Caco-2 (cell line): ENCODE measurements at regions of chr4 and their contacts with region 1.

Region 1: GRCh38 chr4:47032415-47033106 is 1.2 kb downstream of the GABRB1 start:
- DNase-seq: peak; percentile 75 to 84
- H3K4me3 ChIP-seq: peak overlapping the region; percentile 67
- H3K4me3 Mint-ChIP-seq: peak overlapping the region; percentile 97
- H3K27ac Mint-ChIP-seq: peak overlapping the region; percentile 63
- H3K4me1 ChIP-seq: no peaks in the 10 kb centered on the region; the same call in none of the 2 replicates
- H3K4me1 Mint-ChIP-seq: peaks cover 6% of the 10 kb centered on the region
- H3K27me3 ChIP-seq: no peaks in the 10 kb centered on the region
- H3K27me3 Mint-ChIP-seq: no peaks in the 10 kb centered on the region
- CTCF ChIP-seq: peak; percentile 80 to 88

Region 2: DNA sequence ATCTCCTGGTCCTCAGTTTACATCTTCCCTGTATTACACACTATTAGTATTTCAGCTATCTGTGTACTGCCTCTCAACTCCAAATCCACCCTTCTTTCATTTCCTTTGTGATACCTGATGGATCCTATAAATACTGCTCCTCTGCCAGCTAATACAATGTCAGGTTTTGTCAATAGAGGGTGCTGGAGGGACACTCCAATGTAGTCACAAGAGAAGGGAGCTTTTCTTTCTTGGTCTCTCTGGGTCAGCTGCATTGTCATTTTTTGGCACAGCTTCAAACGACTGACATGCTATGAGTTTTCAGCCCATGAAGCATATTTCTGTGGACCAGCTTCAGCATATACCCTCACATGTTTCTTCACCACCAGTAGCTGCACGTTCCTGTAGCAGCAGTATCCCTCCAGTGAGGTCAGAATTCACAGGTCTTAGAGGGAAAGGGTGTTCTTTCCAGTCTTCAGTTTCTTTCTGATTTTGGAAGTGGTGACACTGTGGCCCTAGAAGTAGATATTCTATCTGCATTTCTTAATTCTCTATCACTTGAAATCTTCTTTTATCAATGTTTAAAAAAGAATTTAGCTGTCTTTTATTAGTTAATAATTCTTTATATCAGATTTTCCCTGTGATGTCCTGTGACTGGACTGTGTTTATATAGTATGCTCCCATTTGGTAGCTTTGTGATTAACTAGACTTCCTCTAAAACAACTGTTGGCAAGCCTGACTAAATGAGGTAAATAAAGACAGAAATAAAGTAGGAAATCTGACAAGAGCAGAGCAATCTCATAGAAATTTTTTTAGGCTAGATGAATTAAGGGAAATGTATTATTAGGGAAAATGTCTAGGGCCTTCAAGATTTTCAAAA is 703.2 kb before region 1 on chr4:
- CTCF ChIA-PET with region 1: interaction called, 5 read pairs
- POLR2A ChIA-PET with region 1: no interaction called
- intact Hi-C with region 1: loop called (anchors 2 kb)
- DNase-seq: peak; percentile 54 to 73
- H3K4me3 ChIP-seq: no peak overlapping the region
- H3K4me3 Mint-ChIP-seq: no peak overlapping the region
- H3K27ac Mint-ChIP-seq: no peak overlapping the region
- H3K4me1 ChIP-seq: no peaks in the 10 kb centered on the region
- H3K4me1 Mint-ChIP-seq: no peaks in the 10 kb centered on the region
- H3K27me3 ChIP-seq: no peaks in the 10 kb centered on the region
- H3K27me3 Mint-ChIP-seq: no peaks in the 10 kb centered on the region
- CTCF ChIP-seq: peak; percentile 66 to 69

Region 3: GRCh38 chr4:46793036-46793435 is 239.5 kb before region 1 on chr4:
- CTCF ChIA-PET with region 1: no interaction called
- POLR2A ChIA-PET with region 1: no interaction called
- intact Hi-C with region 1: loop called (anchors 1 kb)
- DNase-seq: peak; percentile 93 to 96
- H3K4me3 ChIP-seq: no peak overlapping the region
- H3K4me3 Mint-ChIP-seq: peak overlapping the region; percentile 36
- H3K27ac Mint-ChIP-seq: peak overlapping the region; percentile 74
- H3K4me1 ChIP-seq: peaks cover 26% of the 10 kb centered on the region
- H3K4me1 Mint-ChIP-seq: peaks cover 23% of the 10 kb centered on the region
- H3K27me3 ChIP-seq: no peaks in the 10 kb centered on the region
- H3K27me3 Mint-ChIP-seq: no peaks in the 10 kb centered on the region
- CTCF ChIP-seq: no peak

Region 4: DNA sequence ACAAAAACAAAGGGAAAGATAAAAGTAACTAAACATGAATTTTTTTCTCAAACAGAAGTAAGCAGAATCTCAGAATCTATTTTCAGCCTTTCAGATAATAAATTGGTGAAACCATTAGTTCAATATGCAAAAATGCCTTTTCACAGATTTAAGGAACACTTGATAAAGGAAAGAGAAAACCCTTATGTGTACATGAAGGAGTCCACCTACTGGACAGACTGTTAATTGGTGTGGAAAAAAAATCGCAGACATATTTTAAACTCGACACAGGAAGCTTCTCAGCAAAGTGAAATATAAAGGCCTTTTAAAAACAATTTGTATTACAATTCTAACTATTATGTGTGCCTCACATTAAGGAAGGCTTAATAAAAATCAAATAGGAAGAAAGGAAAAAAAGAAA is 145.8 kb before region 1 on chr4:
- CTCF ChIA-PET with region 1: no interaction called
- POLR2A ChIA-PET with region 1: no interaction called
- intact Hi-C with region 1: loop called (anchors 1 kb)
- DNase-seq: peak in 1 of 2 experiments; percentile 32
- H3K4me3 ChIP-seq: no peak overlapping the region
- H3K4me3 Mint-ChIP-seq: no peak overlapping the region
- H3K27ac Mint-ChIP-seq: peak overlapping the region; percentile 72
- H3K4me1 ChIP-seq: peaks cover 49% of the 10 kb centered on the region
- H3K4me1 Mint-ChIP-seq: peaks cover 29% of the 10 kb centered on the region
- H3K27me3 ChIP-seq: no peaks in the 10 kb centered on the region
- H3K27me3 Mint-ChIP-seq: no peaks in the 10 kb centered on the region
- CTCF ChIP-seq: peak; percentile 29 to 32

Region 5: GRCh38 chr4:47002593-47002992 is 30.0 kb before region 1 on chr4:
- CTCF ChIA-PET with region 1: no interaction called
- POLR2A ChIA-PET with region 1: no interaction called
- intact Hi-C with region 1: loop called (anchors 2 kb)
- DNase-seq: peak in 1 of 2 experiments; percentile 7
- H3K4me3 ChIP-seq: no peak overlapping the region
- H3K4me3 Mint-ChIP-seq: no peak overlapping the region
- H3K27ac Mint-ChIP-seq: no peak overlapping the region
- H3K4me1 ChIP-seq: peaks cover 4% of the 10 kb centered on the region; the same call in 1 of the 2 replicates
- H3K4me1 Mint-ChIP-seq: peaks cover 4% of the 10 kb centered on the region
- H3K27me3 ChIP-seq: no peaks in the 10 kb centered on the region
- H3K27me3 Mint-ChIP-seq: no peaks in the 10 kb centered on the region
- CTCF ChIP-seq: peak; percentile 42 to 53

Region 6: DNA sequence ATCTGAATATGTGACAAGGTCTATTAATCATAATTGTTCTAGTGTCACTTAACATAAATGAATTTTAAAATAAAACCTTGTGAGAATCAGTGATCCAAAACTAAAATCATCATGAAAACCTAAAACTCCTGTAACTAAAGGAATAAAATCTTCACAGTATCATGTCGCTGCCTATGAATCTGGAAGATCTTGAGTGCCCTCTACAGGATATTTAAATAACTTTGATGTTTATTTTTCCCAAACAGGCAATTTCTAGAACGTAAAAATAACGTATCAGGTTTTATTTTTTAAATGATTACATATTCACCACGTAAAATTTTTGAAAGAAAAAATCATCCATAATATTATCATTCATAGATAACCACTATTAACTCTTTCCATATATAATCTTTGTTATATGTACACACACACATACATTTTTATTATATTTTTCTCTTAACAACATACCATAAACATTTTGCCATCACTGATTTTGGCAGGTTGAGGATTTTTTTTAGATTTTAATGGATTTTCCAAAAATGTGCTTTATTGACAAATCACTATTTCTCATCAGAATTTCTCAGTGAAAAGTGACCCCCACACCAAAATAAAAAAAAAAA is 351.4 kb after region 1 on chr4:
- CTCF ChIA-PET with region 1: no interaction called
- POLR2A ChIA-PET with region 1: no interaction called
- intact Hi-C with region 1: loop called (anchors 2 kb)
- DNase-seq: peak in 1 of 2 experiments; percentile 5
- H3K4me3 ChIP-seq: no peak overlapping the region
- H3K4me3 Mint-ChIP-seq: no peak overlapping the region
- H3K27ac Mint-ChIP-seq: no peak overlapping the region
- H3K4me1 ChIP-seq: no peaks in the 10 kb centered on the region
- H3K4me1 Mint-ChIP-seq: no peaks in the 10 kb centered on the region
- H3K27me3 ChIP-seq: no peaks in the 10 kb centered on the region; the same call in 1 of the 2 replicates
- H3K27me3 Mint-ChIP-seq: no peaks in the 10 kb centered on the region
- CTCF ChIP-seq: peak; percentile 19 to 52